ENCODE measurements at regions of chr19 and their contacts with region 1.

Region 1: GRCh38 chr19:18846862-18847548 is 15.2 kb downstream of the UPF1 start:
- DNase-seq: peak; percentile 54
- ATAC-seq: peak; percentile 90
- H3K4me3 ChIP-seq: no peak overlapping the region
- H3K27ac ChIP-seq: no peak overlapping the region
- H3K4me1 ChIP-seq: peaks cover 22% of the 10 kb centered on the region
- H3K27me3 ChIP-seq: no peaks in the 10 kb centered on the region
- CTCF ChIP-seq: peak; percentile 92
- EP300 ChIP-seq: no peak
- POLR2A ChIP-seq: no peak
- RAD21 ChIP-seq: peak; percentile 92

Region 2: DNA sequence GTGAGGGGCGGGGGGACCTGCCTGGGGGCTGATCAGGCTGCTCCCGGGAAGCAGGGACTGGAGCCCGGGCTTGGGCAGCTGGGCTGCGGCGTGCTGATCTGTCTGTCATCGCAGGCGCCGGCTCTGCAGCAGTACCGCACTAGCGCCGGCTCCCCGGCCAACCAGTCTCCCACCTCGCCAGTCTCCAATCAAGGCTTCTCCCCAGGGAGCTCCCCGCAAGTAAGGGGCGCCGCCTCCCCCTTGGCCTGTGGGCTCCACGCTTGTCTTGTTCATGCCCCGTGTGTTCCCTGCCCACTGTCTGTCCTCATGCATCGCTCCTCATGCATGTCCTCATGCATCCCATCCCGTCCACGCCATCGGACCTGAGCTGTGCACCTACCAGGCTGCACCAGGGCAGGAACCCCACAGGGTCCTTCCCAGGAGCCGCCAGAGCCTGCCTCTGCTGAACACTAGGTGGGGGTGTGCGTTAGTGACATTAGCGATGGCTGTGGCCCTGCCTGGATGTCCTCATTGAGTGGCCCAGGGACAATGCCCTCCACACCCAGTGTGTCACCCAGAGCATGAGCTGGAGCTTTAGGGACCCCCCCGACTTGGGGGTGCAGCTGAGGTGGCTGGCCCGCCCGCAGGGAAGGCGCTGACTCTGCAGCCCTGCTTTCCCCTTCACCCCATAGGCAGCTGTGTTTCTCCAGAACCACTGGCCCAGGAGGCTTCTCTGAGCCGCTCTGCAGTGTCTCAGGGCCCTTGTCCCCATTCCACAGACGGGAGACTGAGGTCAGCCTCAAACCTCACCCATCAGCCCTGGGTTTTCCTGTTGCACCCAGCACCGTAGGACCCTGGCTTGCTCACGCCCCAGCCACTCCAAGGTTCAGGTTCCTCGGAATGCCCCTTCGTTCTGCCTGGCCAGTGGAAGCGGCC is 75.4 kb before region 1 on chr19:
- CTCF ChIA-PET with region 1: interaction called, 9 read pairs
- POLR2A ChIA-PET with region 1: no interaction called
- in situ Hi-C with region 1: no loop called
- intact Hi-C with region 1: loop called (anchors 1 kb)
- DNase-seq: peak; percentile 29
- ATAC-seq: peak; percentile 74
- H3K4me3 ChIP-seq: no peak overlapping the region
- H3K27ac ChIP-seq: no peak overlapping the region
- H3K4me1 ChIP-seq: no peaks in the 10 kb centered on the region
- H3K27me3 ChIP-seq: no peaks in the 10 kb centered on the region
- CTCF ChIP-seq: peak; percentile 89
- EP300 ChIP-seq: no peak
- POLR2A ChIP-seq: no peak
- RAD21 ChIP-seq: peak; percentile 72

Measured in HepG2 (cell line).